Dendritic cell treated with granulocyte-macrophage colony-stimulating factor and Interleukin-4, amounts not matched to agents 40 ng/mL and 50 ng/mL, for 4 days (primary cell): ENCODE measurements at regions of chr2 and their contacts with region 1.

Region 1: DNA sequence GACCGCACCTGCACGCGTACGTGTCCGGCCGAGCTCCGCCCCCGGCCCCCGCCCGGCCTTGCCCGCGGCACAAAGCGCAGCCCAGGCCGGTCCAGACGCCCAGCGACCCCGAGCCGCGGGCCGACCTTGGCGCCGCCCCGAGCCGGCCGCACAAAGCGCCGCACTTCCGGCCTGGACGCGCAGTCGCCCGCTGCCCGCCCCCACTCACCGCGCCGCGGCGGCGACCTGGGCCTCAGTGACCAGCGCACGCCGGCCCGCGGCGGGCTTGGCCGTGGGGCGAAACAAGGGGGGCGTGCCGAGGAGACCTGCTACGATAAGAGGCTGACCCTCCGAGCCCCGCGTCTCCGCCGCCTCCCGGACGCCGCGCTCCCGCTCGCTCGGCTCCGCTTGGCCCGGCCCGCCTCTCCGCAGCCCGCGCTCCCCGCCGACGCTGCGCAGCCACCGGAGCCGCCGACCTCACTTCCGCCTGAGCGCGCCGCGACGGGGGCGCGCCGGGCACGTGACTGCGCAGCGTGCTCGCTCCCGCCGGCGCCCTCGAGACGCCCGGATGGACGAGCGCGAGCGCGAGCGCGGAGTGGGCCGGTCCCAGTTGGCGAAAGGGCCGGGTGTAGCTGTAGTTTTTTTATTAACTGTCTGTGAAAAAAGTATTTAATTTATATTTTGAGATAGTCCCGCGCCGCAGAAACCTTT is at the start of gene FAM168B:
- H3K4me3 Mint-ChIP-seq: peak within 1 kb of the TSS; percentile 90
- H3K27ac Mint-ChIP-seq: peak within 1 kb of the TSS; percentile 97
- H3K4me1 Mint-ChIP-seq: peaks cover 15% of the 10 kb centered on the region
- H3K27me3 Mint-ChIP-seq: no peaks in the 10 kb centered on the region

Region 2: DNA sequence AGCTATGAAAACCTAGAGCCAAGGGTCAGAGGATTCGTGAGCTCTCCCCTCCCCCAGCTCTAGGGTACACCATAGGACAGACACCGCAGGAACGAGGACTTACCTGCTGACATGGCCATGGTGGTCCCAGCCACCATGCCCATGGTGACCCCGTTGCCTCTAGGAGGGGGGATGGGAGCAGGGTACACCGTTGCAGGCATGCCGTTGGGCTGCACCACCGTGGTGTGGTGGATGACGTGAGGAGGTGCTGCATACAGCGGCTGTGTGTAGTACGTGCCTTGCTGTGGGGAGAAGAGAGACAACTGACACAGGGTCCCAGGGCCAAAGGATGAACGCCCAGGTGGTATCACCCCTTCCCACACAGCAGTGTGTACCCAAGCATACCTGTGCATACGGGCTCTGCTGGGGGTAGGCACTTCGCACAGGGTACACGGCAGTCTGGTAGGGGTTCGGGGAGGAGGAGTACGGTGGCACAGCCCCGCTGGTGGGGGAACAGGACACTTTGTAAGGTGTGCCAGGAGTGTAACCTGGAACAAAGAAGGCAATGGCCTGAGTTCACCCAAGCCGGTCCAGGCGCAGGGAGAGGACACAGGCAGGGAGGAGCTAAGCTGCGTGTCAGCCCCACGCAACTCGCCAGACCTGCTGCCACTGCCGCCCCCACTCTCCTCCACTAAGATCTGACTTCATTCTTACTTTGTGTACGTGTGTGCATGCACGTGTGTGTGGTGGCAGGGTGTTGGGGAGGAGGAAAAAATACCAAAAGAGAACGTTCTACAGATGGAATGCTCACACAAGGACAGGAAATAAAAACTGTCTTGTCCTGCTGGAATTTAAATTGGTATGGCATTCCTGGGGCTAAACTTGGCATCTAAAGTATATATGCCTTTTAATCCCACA is 37.7 kb before region 1 on chr2:
- intact Hi-C with region 1: no loop called
- H3K4me3 Mint-ChIP-seq: no peak overlapping the region
- H3K27ac Mint-ChIP-seq: no peak overlapping the region
- H3K4me1 Mint-ChIP-seq: no peaks in the 10 kb centered on the region
- H3K27me3 Mint-ChIP-seq: no peaks in the 10 kb centered on the region

Region 3: DNA sequence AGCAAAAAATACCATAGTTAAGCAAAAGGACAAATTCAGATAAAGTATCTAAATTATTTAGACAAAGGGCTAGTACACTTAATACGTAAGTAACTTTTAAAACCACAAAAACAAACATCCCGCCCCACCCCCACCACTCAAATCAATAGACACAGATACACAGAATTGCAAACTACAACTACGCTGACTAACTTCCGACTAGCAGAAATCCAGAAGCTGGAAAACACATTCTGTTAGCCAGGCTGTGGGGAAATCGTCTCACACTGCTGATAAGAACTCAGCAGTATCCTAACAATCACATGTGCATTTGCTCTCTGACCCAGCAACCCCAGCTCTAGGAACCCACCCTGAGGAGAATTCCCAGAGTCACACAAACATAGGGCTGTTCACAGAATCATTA is 16.4 kb before region 1 on chr2:
- intact Hi-C with region 1: no loop called
- H3K4me3 Mint-ChIP-seq: no peak overlapping the region
- H3K27ac Mint-ChIP-seq: no peak overlapping the region
- H3K4me1 Mint-ChIP-seq: peaks cover 8% of the 10 kb centered on the region
- H3K27me3 Mint-ChIP-seq: no peaks in the 10 kb centered on the region

Region 4: DNA sequence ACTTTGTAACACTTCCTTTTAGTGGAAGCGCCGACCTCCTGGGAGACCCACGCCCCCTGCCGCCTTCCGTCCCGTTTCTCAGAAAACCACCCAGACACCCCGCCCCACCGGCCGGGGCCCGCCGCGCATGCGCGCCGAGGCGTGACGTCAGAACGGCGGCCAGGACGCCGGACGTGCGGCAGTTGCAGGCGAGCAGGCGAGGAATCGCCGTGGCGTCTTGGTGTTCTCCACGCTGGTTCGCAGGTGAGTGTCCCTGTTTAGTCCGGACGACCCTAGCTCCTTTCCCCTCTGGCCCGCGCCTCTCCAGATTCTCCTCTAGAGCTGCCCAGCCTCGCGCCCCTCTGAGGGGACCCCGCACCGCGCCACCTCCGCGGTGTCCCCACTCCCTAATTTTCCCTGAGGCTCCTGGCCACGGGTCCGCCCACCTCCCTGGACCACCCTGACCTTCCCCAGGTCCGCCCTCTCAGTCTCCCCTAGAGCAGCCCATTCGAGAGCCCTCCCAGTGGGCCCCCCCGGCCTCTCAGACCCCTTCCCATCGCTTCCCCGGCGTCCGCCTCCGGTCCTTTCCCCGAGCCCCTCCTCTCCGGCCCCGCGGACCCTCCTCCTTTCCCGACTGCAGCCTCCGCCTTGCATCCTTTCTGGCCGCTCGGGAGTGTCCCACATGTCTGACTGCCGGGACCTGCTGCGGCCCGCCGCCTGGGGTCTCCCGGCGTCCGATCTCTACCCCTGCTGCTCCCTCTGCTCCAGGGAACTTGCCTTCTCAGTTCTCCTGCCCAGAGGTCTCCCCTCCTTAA is 12.2 kb after region 1 on chr2 and contains the start of gene PLEKHB2:
- intact Hi-C with region 1: loop called (anchors 1 kb)
- H3K4me3 Mint-ChIP-seq: peak within 1 kb of the TSS; percentile 99
- H3K27ac Mint-ChIP-seq: peak within 1 kb of the TSS; percentile 99
- H3K4me1 Mint-ChIP-seq: peaks cover 45% of the 10 kb centered on the region
- H3K27me3 Mint-ChIP-seq: no peaks in the 10 kb centered on the region